ENCODE measurements at regions of chr17 and their contacts with region 1.

Region 1: GRCh38 chr17:17648762-17649161 is 32.5 kb upstream of the RAI1 start:
- H3K4me3 ChIP-seq: no peak overlapping the region
- H3K27ac ChIP-seq: no peak overlapping the region
- H3K4me1 ChIP-seq: no peaks in the 10 kb centered on the region
- CTCF ChIP-seq: no peak

Region 2: GRCh38 chr17:17344462-17345293 is 304.1 kb before region 1 on chr17:
- CTCF ChIA-PET with region 1: interaction called, 10 read pairs
- POLR2A ChIA-PET with region 1: no interaction called
- H3K4me3 ChIP-seq: no peak overlapping the region
- H3K27ac ChIP-seq: no peak overlapping the region
- H3K4me1 ChIP-seq: no peaks in the 10 kb centered on the region
- CTCF ChIP-seq: no peak

Region 3: DNA sequence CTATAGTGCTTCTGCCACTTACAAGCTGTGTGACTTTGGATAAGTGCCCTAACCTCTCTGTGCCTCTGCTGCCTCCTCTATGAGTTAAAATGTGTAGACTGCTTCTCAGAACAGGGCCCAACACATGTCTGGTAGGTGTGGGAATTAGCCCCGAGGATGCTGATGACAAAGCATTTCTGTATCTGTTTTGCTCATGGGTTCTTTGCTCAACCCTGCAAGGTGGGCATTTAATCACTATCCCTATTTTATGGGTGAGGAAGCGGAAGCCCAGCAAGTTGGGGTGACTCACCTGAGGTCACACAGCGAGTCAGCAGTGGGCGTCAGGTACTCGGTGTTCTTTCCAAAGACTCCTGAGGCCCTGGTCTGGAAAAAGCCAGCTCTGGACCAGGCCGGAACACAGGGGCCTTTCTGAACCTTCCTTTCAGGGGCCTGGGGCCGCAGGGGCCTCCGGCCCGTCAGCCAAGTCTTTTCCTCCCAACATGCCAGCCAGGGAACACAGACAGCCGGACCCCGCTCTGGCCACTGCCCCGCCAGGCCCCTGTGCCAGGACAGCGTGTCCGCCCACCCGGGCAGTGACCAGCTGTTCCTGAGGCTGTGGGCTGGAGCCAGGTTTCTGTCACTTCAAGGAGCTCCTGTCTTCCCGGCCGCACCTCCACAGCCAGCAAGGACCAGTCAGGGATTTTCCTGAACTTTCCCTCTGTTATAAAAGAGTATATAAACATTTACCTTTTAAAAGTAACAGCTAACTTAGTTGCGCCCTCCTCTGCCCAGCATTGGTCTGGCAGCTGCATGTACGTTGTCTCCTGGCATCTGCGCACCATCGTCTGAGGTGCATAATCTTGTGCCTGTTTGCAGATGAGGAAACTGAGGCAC is 125.5 kb after region 1 on chr17:
- CTCF ChIA-PET with region 1: no interaction called
- POLR2A ChIA-PET with region 1: no interaction called
- H3K4me3 ChIP-seq: no peak overlapping the region
- H3K27ac ChIP-seq: no peak overlapping the region
- H3K4me1 ChIP-seq: peaks cover 9% of the 10 kb centered on the region
- CTCF ChIP-seq: no peak

Measured in HEK293 (cell line).